GM13976 (cell line): ENCODE measurements at regions of chr3 and their contacts with region 1.

Region 1: DNA sequence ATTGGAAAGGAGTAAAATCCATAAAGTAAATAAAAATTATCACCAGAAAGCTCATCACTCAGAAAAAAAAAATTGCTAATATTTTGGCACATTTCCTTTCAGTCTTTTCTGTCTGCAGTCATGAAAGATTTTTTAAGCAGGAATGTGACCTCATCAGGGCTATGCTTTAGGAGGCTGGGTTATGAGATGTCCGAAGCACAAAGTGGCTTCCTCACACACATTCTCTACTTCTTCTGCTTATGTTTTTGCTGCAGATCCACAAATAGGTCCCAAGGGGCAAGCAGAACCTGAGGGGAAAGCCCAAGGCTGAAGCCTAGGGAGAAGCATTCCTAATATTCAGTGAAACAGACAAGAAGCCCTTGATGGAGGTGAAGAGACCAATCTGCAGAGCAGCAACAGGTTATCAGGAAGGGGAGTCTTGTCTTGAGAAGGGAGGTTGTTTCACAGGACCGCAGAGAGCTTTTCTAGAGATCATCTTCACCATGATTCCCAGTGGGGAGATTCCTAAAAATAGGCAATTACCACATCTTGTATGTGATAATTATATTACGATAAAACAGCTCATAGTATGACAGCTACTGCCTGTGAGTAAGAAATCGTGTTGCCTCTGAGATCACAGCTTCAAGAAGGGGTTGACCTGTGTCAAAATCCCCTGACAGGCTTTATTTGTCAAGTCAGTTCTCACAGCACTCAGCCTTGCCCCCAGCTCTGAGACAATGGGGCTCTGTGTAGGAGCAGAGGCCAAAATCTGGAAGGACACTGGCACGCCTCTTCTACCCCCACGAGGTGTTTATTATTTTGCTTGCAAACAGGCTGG is 60.5 kb downstream of the IGF2BP2 start:
- DNase-seq: no peak
- CTCF ChIP-seq: no peak

Region 2: DNA sequence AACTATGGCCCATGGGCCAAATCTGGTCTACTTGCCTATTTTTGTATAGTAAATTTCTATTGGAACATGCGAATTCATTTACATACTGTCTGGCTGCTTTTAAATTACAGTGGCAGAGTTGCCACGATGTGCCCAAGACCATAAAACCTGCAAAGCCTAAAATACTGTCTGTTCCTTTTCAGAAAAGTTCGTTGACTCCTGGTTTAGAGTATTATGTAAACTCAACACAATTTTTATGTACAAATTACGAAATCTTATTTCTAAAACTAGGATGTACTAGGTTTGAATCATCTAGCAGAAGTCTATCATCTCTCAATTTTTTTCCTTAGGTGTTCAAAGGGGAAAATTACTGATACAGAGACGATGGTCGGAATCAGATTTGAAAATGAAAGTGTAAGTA is 151.4 kb before region 1 on chr3:
- in situ Hi-C with region 1: no loop called
- DNase-seq: no peak
- CTCF ChIP-seq: no peak

Region 3: DNA sequence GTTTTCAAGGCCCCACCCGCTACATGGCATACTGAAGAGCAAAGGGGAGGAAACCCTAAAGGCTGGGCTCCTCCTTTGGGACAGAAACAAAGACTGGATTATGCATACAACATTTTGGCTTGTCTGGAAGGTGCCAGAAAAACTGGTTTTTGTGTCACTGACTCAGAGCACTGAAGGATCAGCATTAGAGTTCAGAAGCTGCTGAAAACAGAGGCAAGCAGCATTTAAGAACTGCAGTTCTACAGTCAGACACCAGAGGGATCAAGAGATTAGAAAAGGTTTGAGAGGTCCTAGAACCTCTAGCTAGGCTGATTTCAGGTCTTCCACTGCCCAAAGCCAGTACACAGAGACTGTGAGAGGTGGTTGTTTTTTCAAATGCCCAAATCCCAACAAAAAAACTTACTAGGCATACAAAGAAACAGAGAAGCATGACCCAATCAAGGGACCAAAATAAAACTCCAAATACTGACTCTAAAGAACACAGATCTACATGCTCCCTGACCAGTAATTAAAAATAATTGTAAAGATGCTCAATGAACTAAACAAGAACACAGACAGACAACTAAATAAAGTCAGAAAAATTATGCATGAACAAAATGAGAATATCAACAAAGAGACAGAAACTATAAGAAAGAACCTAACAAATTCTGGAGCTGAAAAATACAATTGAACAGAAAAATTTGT is 87.1 kb before region 1 on chr3:
- in situ Hi-C with region 1: loop called (anchors 10 kb)
- DNase-seq: peak; percentile 71
- CTCF ChIP-seq: no peak